Mammary epithelial cell (primary cell): ENCODE measurements at regions of chr6 and their contacts with region 1.

Region 1: DNA sequence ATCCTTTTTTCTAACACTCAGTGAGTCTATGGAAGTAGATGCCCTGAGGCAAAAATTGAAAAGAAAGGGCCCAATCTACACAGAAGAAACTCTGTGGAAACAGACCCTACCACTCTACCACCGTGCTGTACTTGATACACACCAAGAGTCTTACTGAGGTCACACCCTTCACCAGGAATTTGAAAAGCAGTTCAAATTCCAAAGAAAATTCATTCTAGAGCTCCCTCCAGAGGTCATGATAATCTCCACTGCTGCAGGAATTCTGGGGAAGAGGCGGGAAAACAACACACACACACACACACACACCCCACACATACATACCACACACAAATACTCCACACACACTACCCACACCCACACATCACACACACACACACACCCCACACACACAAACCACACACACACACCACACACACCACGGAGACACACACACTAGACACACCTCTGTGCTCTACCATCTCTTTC is 336.8 kb downstream of the HDGFL1 start:
- DNase-seq: peak; percentile 42
- H3K4me3 ChIP-seq: no peak overlapping the region
- H3K27ac ChIP-seq: no peak overlapping the region
- H3K4me1 ChIP-seq: peaks cover 12% of the 10 kb centered on the region
- H3K27me3 ChIP-seq: no peaks in the 10 kb centered on the region
- CTCF ChIP-seq: peak; percentile 30 to 52

Region 2: GRCh38 chr6:22727710-22728109 is 178.4 kb before region 1 on chr6:
- CTCF ChIA-PET with region 1: no interaction called
- dilution Hi-C with region 1: no loop called
- in situ Hi-C with region 1: no loop called
- intact Hi-C with region 1: no loop called
- DNase-seq: no peak
- H3K4me3 ChIP-seq: no peak overlapping the region
- H3K27ac ChIP-seq: no peak overlapping the region
- H3K4me1 ChIP-seq: no peaks in the 10 kb centered on the region
- H3K27me3 ChIP-seq: no peaks in the 10 kb centered on the region
- CTCF ChIP-seq: no peak

Region 3: GRCh38 chr6:22747571-22747970 is 158.6 kb before region 1 on chr6:
- CTCF ChIA-PET with region 1: no interaction called
- dilution Hi-C with region 1: no loop called
- in situ Hi-C with region 1: no loop called
- intact Hi-C with region 1: loop called (anchors 5 kb)
- DNase-seq: no peak
- H3K4me3 ChIP-seq: no peak overlapping the region
- H3K27ac ChIP-seq: no peak overlapping the region
- H3K4me1 ChIP-seq: no peaks in the 10 kb centered on the region
- H3K27me3 ChIP-seq: no peaks in the 10 kb centered on the region
- CTCF ChIP-seq: no peak

Region 4: GRCh38 chr6:22828179-22829062 is 77.7 kb before region 1 on chr6:
- CTCF ChIA-PET with region 1: interaction called, 3 read pairs
- dilution Hi-C with region 1: no loop called
- in situ Hi-C with region 1: no loop called
- intact Hi-C with region 1: loop called (anchors 2 kb)
- DNase-seq: peak; percentile 97
- H3K4me3 ChIP-seq: peak overlapping the region in 2 of 3 experiments; percentile 5 to 19
- H3K27ac ChIP-seq: peak overlapping the region; percentile 90
- H3K4me1 ChIP-seq: peaks cover 21% of the 10 kb centered on the region
- H3K27me3 ChIP-seq: no peaks in the 10 kb centered on the region
- CTCF ChIP-seq: peak; percentile 80 to 85

Region 5: DNA sequence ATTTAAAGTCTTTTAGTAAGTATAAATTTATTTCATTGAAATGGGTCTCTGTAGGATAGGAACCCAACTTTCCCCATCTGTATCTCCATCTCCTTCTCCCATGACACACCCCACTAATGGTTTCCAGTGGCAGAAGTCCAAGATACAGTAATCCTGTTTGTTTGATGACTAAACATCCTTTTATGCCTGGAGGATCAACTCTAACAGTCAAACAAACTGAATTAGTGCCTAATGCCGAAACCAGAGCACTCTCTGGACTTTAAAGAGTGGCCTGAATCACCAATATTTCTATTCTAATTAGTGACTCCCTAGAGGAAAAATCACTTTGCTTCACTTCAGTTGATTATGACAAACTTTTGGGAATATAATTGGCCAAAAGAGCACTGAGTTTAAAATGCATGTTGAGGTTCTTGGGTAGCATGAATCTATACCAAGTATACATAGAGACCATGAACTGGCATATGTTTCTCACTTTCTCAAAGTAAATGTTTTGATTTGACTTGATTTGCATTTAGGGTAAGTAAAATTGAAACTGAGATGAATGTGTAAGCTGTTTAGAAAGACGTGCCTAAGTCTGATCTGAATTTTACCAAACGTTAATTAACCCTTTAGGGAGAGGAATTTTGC is 443.5 kb after region 1 on chr6:
- CTCF ChIA-PET with region 1: interaction called, 18 read pairs
- dilution Hi-C with region 1: no loop called
- in situ Hi-C with region 1: no loop called
- intact Hi-C with region 1: no loop called
- DNase-seq: peak; percentile 94
- H3K4me3 ChIP-seq: no peak overlapping the region
- H3K27ac ChIP-seq: peak overlapping the region; percentile 53
- H3K4me1 ChIP-seq: peaks cover 7% of the 10 kb centered on the region
- H3K27me3 ChIP-seq: no peaks in the 10 kb centered on the region
- CTCF ChIP-seq: no peak

Region 6: DNA sequence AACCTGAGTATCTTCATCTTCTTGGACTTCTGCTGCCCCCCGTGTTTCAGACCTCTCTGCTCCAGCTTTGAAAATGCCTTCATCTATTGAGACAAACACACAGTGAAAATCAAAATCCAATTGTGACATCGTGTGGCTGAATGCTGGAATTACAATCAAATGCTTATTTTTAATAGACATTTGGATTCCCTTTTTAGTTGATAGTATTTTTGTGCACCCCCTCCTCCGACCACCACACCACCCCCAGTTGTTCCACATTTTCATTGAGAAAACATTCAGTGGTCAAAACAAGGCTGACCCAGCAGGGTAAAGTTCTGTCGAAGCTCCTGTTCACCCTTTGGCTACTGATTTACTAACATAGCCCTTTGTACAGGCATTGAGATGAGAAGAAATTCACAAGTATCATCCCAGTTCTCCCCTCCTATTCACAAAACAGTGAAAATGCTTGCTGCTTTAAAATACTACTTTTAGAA is 1298.9 kb after region 1 on chr6:
- CTCF ChIA-PET with region 1: no interaction called
- dilution Hi-C with region 1: no loop called
- in situ Hi-C with region 1: no loop called
- intact Hi-C with region 1: loop called (anchors 10 kb)
- DNase-seq: peak; percentile 20
- H3K4me3 ChIP-seq: no peak overlapping the region
- H3K27ac ChIP-seq: no peak overlapping the region
- H3K4me1 ChIP-seq: no peaks in the 10 kb centered on the region
- H3K27me3 ChIP-seq: no peaks in the 10 kb centered on the region
- CTCF ChIP-seq: peak; percentile 51 to 53